PC-9 (cell line): ENCODE measurements at regions of chr7 and their contacts with region 1.

Region 1: GRCh38 chr7:7542251-7542835 is 6.7 kb upstream of the COL28A1 start:
- DNase-seq: no peak
- H3K4me3 ChIP-seq: no peak overlapping the region
- H3K27ac ChIP-seq: no peak overlapping the region
- H3K4me1 ChIP-seq: peaks cover 15% of the 10 kb centered on the region
- H3K27me3 ChIP-seq: no peaks in the 10 kb centered on the region
- CTCF ChIP-seq: no peak

Region 2: DNA sequence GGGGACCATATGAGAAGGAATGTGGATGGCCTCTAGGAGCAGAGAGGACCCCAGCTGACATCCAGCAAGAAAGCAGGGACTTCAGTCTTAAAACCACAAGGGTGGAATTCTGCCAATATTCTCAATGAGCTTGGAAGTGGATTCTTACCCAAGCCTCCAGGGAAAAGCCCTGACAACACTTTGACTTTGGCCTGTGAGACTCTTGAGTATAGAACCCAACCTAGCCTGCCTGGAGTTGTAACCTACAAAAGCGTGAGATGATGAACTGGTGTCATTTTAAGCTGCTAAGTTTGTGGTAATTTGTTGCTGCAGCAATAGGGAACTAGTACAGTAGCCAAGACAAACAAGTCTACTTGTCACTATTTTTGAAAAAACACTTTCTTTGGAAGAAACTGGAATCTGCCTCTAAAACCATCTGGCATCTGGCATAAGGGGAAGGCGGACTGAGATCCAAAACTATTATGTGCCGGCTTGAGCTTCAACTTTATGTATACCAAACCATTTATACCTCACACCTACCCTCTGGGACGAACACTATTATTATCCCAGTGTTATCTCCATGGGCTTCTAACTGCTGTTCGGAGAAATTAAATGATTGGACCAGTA is 277.2 kb before region 1 on chr7:
- CTCF ChIA-PET with region 1: no interaction called
- POLR2A ChIA-PET with region 1: no interaction called
- intact Hi-C with region 1: loop called (anchors 10 kb)
- DNase-seq: no peak
- H3K4me3 ChIP-seq: no peak overlapping the region
- H3K27ac ChIP-seq: no peak overlapping the region
- H3K4me1 ChIP-seq: peaks cover 10% of the 10 kb centered on the region
- H3K27me3 ChIP-seq: no peaks in the 10 kb centered on the region
- CTCF ChIP-seq: no peak

Region 3: GRCh38 chr7:7424151-7424873 is 118.0 kb before region 1 on chr7:
- CTCF ChIA-PET with region 1: interaction called, 7 read pairs
- POLR2A ChIA-PET with region 1: no interaction called
- intact Hi-C with region 1: loop called (anchors 2 kb)
- DNase-seq: peak; percentile 55 to 60
- H3K4me3 ChIP-seq: peak overlapping the region; percentile 29; the same call in 1 of the 2 replicates
- H3K27ac ChIP-seq: no peak overlapping the region
- H3K4me1 ChIP-seq: no peaks in the 10 kb centered on the region
- H3K27me3 ChIP-seq: no peaks in the 10 kb centered on the region
- CTCF ChIP-seq: peak; percentile 88

Region 4: DNA sequence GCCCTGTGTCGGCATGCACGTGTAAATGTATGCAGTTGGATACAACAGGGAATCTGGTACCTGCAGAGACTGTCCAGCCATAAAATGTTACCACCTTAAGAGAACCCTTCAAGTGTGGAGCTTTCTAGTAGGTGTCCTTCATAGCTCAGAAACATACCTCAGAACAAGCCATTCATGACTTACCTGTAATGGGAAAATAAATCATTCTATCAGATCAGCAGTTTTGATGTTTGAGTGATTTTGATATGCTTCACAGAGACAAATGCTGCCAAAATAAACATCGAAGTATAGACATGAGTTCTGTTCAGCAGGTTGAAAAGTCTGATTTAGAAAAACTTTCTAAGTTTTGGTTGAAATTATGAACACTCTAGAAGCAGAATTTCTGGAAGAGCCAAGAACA is 64.7 kb after region 1 on chr7:
- CTCF ChIA-PET with region 1: no interaction called
- POLR2A ChIA-PET with region 1: no interaction called
- intact Hi-C with region 1: no loop called
- DNase-seq: no peak
- H3K4me3 ChIP-seq: no peak overlapping the region
- H3K27ac ChIP-seq: no peak overlapping the region
- H3K4me1 ChIP-seq: no peaks in the 10 kb centered on the region
- H3K27me3 ChIP-seq: no peaks in the 10 kb centered on the region
- CTCF ChIP-seq: no peak